ENCODE measurements at regions of chr11 and their contacts with region 1.

Region 1: DNA sequence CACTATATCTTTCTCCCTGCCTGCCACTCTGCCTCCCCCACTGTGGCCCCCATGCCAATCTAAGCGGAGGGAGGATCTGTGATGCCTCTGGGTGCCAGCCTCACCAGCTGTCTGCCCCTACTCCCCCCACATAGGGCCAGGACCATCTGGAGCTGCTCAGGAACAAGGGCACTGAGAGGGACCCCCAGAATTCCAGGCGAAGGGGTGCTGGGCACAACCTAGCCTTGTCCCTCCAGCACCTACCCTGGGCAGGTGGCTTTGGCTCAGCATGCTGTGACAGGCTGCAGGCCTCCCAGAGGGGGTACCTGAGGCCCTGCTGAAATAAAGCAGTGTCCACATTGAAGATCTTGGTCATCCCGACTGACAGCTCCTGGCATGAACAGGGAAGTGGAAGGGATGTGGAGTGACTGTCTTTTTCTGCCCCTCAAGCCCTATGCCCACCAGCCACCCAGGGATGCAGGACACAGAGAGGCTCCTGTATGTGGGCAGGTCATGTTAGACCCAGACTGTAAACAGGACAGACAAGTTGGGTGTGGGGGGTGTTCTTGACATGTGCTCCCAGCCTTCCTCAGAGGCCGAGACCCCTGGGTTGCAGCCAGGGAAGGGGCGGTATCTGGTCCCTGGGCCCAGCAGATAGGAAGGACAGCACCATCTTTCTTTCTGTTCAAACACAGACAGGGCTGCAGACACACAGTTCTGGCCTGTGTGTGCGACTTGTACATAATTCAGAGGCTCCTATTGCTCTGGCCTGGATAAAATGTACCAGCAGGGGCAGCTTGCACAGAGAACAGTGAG is 16.9 kb downstream of the GDPD5 start:
- DNase-seq: no peak
- H3K4me3 ChIP-seq: no peak overlapping the region
- CTCF ChIP-seq: no peak

Region 2: GRCh38 chr11:75520688-75521087 is 11.8 kb after region 1 on chr11:
- CTCF ChIA-PET with region 1: interaction called, 16 read pairs
- POLR2A ChIA-PET with region 1: interaction called, 4 read pairs
- DNase-seq: no peak
- H3K4me3 ChIP-seq: no peak overlapping the region
- CTCF ChIP-seq: no peak

Region 3: DNA sequence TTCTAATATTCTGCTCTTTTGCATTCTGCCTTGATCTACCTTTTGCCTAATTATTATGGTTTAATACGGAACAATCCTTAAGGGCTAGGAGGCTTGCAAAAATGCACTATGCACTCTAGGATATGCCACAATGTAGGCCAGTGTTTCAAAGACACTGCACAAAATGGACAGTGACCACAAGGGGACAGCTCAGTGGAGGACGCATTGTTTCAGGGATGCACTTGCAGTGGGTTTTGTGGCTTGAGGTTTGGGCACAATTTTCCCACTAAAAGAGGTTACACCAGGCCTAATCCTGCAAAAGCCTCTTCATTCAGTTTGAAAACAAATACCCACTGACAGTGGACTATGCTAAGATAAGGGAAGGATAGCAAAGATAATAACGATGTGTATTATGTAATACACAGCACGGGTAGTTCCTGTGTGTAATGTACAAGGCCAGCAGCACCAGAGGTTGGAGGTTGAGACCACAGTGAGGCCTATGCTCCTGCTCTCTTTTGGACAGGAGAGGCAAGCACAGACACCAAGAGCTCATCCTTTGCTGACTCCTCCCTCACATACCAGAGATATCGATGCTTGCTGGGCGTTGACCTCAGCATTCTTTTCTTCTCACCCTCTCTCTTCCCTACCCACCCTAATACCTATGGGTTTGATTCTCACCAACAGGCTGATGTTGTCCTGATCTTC is 147.3 kb after region 1 on chr11:
- CTCF ChIA-PET with region 1: no interaction called
- POLR2A ChIA-PET with region 1: no interaction called
- DNase-seq: no peak
- H3K4me3 ChIP-seq: no peak overlapping the region
- CTCF ChIP-seq: no peak